CD4-positive, alpha-beta T cell (primary cell): ENCODE measurements at regions of chr4 and their contacts with region 1.

Region 1: GRCh38 chr4:26943391-26943790 is 82.8 kb downstream of the STIM2 start:
- DNase-seq: no peak
- ATAC-seq: no peak
- H3K4me3 ChIP-seq: no peak overlapping the region
- H3K4me3 Mint-ChIP-seq: no peak overlapping the region
- H3K27ac ChIP-seq: no peak overlapping the region
- H3K27ac Mint-ChIP-seq: no peak overlapping the region
- H3K4me1 ChIP-seq: no peaks in the 10 kb centered on the region
- H3K4me1 Mint-ChIP-seq: peaks cover 77% of the 10 kb centered on the region
- H3K27me3 ChIP-seq: no peaks in the 10 kb centered on the region
- H3K27me3 Mint-ChIP-seq: no peaks in the 10 kb centered on the region
- CTCF ChIP-seq: no peak

Region 2: GRCh38 chr4:26959654-26960047 is 16.3 kb after region 1 on chr4:
- CTCF ChIA-PET with region 1: no interaction called
- POLR2A ChIA-PET with region 1: no interaction called
- intact Hi-C with region 1: loop called in 1 of 2 experiments (anchors 2 kb)
- DNase-seq: peak in 3 of 14 experiments; percentile 19 to 37 (median 30)
- ATAC-seq: peak; percentile 57
- H3K4me3 ChIP-seq: no peak overlapping the region
- H3K4me3 Mint-ChIP-seq: no peak overlapping the region
- H3K27ac ChIP-seq: no peak overlapping the region
- H3K27ac Mint-ChIP-seq: peak overlapping the region; percentile 7
- H3K4me1 ChIP-seq: peaks cover 3% of the 10 kb centered on the region
- H3K4me1 Mint-ChIP-seq: peaks cover 56% of the 10 kb centered on the region
- H3K27me3 ChIP-seq: no peaks in the 10 kb centered on the region
- H3K27me3 Mint-ChIP-seq: no peaks in the 10 kb centered on the region
- CTCF ChIP-seq: no peak

Region 3: DNA sequence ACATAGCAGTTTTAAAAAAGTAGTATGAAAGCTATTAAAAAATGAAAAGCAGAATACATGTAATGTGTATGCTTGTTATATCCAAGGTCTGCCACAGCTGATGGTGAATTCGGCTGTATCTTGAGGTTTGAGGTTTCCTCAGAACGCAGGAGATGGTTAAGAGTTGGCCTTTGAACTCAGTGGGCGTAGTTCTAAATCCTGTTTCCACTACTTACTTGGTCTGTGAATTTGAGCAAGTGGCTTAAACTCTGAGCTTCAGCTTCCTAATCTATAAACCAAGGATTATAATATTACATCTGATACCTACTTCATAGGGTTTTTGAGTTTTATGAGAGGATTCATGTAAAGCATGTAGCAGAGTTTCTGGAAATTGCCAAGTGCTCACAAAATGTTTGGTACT is 42.5 kb after region 1 on chr4:
- CTCF ChIA-PET with region 1: no interaction called
- POLR2A ChIA-PET with region 1: no interaction called
- intact Hi-C with region 1: loop called in 1 of 2 experiments (anchors 5 kb)
- DNase-seq: peak in 6 of 14 experiments; percentile 15 to 79 (median 58)
- ATAC-seq: peak; percentile 98
- H3K4me3 ChIP-seq: no peak overlapping the region
- H3K4me3 Mint-ChIP-seq: peak overlapping the region; percentile 26
- H3K27ac ChIP-seq: no peak overlapping the region
- H3K27ac Mint-ChIP-seq: peak overlapping the region; percentile 12
- H3K4me1 ChIP-seq: peaks cover 10% of the 10 kb centered on the region
- H3K4me1 Mint-ChIP-seq: peaks cover 73% of the 10 kb centered on the region
- H3K27me3 ChIP-seq: no peaks in the 10 kb centered on the region
- H3K27me3 Mint-ChIP-seq: no peaks in the 10 kb centered on the region
- CTCF ChIP-seq: no peak